ENCODE measurements at regions of chr15 and their contacts with region 1.

Region 1: GRCh38 chr15:63288778-63289378 is 11.5 kb downstream of the APH1B start:
- H3K4me3 ChIP-seq: no peak overlapping the region
- H3K27ac ChIP-seq: no peak overlapping the region
- H3K4me1 ChIP-seq: no peaks in the 10 kb centered on the region
- CTCF ChIP-seq: peak; percentile 38; the same call in 1 of the 2 replicates

Region 2: GRCh38 chr15:63402498-63403253 is 113.8 kb after region 1 on chr15:
- CTCF ChIA-PET with region 1: interaction called, 43 read pairs
- POLR2A ChIA-PET with region 1: no interaction called
- H3K4me3 ChIP-seq: no peak overlapping the region
- H3K27ac ChIP-seq: no peak overlapping the region
- H3K4me1 ChIP-seq: peaks cover 6% of the 10 kb centered on the region; the same call in 1 of the 2 replicates
- CTCF ChIP-seq: no peak